Activated B cell treated with CpG ODN at 0.5 μM for 24 hours (primary cell): ENCODE measurements at regions of chr22 and their contacts with region 1.

Region 1: DNA sequence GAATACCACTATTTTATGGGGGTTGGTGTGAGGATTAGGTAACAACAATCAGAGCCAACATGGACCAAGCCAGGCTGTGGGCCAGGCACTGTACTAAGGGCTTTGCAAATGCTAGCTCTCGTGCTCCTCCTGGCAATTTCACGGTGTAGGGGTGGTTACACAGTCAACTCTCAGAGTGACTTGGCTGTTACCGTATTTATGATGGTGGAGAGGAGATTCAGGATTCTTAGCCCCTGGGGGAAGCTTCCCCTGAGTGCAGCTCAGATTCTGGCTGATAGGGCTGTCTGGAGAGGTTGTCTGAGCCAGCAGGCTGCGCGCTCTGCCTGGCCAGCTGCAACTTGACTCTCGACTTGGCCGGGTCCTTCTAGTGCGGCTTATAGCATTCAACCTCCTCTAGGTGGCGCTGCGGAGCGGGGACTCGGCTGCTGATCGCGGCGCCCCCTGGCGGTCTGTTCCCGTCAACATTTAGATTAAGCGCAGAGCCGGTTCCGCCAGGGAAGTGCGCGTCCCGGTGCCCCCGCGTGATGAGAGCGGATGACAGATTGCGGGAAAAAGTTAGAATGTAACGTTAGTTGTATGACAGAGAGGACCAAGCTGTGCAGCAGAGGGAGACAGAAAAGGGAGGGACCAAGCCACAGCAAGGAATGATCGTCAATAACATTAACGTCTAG is 4.5 kb upstream of the NCF4 start:
- DNase-seq: peak; percentile 96
- ATAC-seq: peak; percentile 39
- H3K4me3 Mint-ChIP-seq: peak overlapping the region; percentile 69
- H3K27ac Mint-ChIP-seq: peak overlapping the region; percentile 91
- H3K4me1 Mint-ChIP-seq: peaks cover 64% of the 10 kb centered on the region
- H3K27me3 Mint-ChIP-seq: no peaks in the 10 kb centered on the region
- CTCF ChIP-seq: peak; percentile 100

Region 2: DNA sequence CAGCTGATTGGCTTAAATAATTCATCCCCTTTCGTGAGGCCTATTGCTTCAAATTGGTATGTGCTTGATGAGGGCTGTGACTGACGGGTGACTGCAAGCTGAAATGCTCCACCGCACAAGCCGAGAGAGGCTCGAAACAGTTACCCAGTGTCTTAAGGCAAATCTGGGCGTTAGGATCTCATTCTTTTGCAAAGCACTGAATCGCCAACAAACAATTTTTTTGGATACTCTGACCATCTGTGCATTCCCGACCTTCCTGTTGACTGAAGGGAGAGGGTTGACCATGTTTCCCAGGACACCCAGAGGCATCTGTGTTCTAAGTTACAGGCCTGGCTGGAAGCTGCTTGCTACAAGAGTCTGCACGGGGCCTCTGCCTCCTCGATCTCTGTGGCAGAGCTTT is 184.9 kb before region 1 on chr22:
- CTCF ChIA-PET with region 1: no interaction called
- POLR2A ChIA-PET with region 1: no interaction called
- intact Hi-C with region 1: no loop called
- DNase-seq: no peak
- ATAC-seq: no peak
- H3K4me3 Mint-ChIP-seq: no peak overlapping the region
- H3K27ac Mint-ChIP-seq: no peak overlapping the region
- H3K4me1 Mint-ChIP-seq: no peaks in the 10 kb centered on the region
- H3K27me3 Mint-ChIP-seq: peaks cover 15% of the 10 kb centered on the region
- CTCF ChIP-seq: no peak

Region 3: DNA sequence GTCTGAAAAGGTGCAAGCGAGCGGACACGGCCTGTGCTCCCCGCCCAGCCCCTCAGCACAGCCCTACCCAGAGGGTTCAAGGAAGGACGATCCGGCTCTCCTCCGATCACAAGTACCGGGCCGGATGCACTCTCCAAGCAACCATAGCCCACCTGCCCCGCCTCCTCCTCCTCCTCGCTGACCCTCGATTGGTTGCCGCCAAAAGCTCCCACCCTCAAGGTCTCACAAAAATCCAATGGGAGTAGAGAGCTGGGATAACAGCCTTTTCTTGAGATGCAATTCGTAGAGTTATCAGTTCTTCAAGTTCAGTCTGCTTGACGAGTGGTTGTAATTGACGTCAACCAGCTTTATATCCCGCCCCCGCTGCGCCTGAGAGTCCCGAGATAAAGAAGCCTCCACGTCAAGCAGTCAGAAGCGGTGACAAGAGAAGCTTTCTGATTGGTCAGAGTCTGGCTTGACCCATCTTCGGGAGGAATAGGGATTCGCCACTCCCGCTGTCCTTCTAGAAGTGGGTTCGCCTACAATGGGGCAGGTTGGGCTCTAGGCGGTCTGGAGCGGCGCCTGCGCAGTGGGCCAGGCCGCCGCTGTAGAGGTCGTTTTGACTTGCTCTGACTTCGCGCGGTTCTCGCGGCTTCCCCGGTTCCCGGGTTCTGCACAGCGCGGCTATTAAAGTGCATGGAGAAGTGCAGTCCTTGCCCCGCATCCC is 80.1 kb before region 1 on chr22 and contains the start of gene IFT27:
- CTCF ChIA-PET with region 1: interaction called, 53 read pairs
- POLR2A ChIA-PET with region 1: interaction called, 24 read pairs
- intact Hi-C with region 1: loop called (anchors 1 kb)
- DNase-seq: peak; percentile 81
- ATAC-seq: peak; percentile 89
- H3K4me3 Mint-ChIP-seq: peak within 1 kb of the TSS; percentile 88
- H3K27ac Mint-ChIP-seq: peak within 1 kb of the TSS; percentile 89
- H3K4me1 Mint-ChIP-seq: peaks cover 14% of the 10 kb centered on the region
- H3K27me3 Mint-ChIP-seq: no peaks in the 10 kb centered on the region
- CTCF ChIP-seq: no peak
- total RNA-seq, gene IFT27: 26.2 and 32.7 TPM in 2 replicates

Region 4: DNA sequence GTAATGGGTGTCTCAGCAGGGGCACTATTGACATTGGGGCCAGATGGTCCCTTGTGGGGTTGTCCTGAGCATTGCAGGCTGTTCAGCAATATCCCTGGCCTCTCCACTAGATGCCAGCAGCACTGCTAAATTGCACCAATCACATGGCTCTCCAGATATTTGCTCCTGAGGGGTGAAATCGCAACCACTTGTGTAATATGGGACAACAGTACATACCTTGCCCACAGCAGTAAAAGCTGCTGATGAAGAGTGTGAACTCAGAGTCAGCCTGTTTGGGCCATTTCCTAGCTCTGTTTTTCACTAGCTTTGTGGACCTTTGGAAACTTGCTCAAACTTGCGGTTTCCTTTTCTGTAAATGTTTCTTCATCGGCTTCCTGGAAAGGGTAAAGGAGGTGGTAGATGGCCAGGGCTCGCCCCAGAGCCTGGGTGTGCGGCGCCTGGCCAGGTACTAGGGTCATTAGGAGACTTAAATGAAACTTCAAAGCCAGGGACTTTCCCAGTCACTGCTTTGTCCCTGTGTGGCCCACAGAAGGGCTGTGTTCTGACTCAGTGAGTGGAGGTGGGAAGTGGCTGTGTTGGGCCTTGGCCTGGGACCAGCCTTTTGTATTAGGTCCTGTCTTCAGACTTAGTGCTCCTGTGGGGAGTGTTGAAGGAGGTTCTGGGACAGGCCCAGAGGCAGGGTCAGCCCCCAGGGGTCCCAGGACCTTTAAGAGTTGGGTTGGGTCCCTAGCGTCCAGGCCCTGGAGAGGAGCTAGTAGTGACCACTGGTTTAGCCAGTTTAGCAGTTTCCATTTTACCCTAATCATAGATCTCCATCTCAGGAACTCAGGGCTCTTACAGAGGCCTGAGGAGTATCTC is 17.7 kb after region 1 on chr22:
- CTCF ChIA-PET with region 1: interaction called, 6 read pairs
- POLR2A ChIA-PET with region 1: interaction called, 11 read pairs
- intact Hi-C with region 1: loop called (anchors 2 kb)
- DNase-seq: no peak
- ATAC-seq: peak; percentile 76
- H3K4me3 Mint-ChIP-seq: peak overlapping the region; percentile 28
- H3K27ac Mint-ChIP-seq: peak overlapping the region; percentile 88
- H3K4me1 Mint-ChIP-seq: peaks cover 16% of the 10 kb centered on the region
- H3K27me3 Mint-ChIP-seq: no peaks in the 10 kb centered on the region
- CTCF ChIP-seq: no peak

Region 5: DNA sequence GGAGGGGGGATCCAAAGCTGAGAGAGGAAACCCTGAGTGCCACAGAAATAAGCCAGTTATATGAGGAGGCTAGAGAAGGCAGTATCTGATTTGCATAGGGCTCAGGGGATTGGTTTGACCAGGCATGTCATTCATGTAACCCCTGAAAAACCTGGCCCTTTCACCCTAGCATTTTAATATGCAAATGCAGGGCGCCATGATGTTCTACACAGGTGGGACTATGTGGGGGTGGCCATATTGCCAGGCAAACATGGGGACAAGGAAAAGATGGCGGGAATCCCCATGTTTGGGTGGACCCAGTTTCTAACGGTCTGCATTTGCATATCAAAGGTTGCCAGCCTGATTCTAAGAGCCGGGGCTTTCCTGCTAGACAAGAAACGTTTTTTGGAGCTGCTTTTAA is 84.4 kb after region 1 on chr22:
- CTCF ChIA-PET with region 1: interaction called, 7 read pairs
- POLR2A ChIA-PET with region 1: interaction called, 26 read pairs
- intact Hi-C with region 1: loop called (anchors 1 kb)
- DNase-seq: peak; percentile 38
- ATAC-seq: peak; percentile 87
- H3K4me3 Mint-ChIP-seq: peak overlapping the region; percentile 65
- H3K27ac Mint-ChIP-seq: peak overlapping the region; percentile 89
- H3K4me1 Mint-ChIP-seq: peaks cover 59% of the 10 kb centered on the region
- H3K27me3 Mint-ChIP-seq: no peaks in the 10 kb centered on the region
- CTCF ChIP-seq: no peak

Region 6: GRCh38 chr22:37121887-37122591 is 265.8 kb after region 1 on chr22:
- CTCF ChIA-PET with region 1: no interaction called
- POLR2A ChIA-PET with region 1: no interaction called
- intact Hi-C with region 1: loop called (anchors 2 kb)
- DNase-seq: peak; percentile 62
- ATAC-seq: peak; percentile 92
- H3K4me3 Mint-ChIP-seq: peak overlapping the region; percentile 76
- H3K27ac Mint-ChIP-seq: peak overlapping the region; percentile 94
- H3K4me1 Mint-ChIP-seq: peaks cover 44% of the 10 kb centered on the region
- H3K27me3 Mint-ChIP-seq: no peaks in the 10 kb centered on the region
- CTCF ChIP-seq: no peak

Region 7: DNA sequence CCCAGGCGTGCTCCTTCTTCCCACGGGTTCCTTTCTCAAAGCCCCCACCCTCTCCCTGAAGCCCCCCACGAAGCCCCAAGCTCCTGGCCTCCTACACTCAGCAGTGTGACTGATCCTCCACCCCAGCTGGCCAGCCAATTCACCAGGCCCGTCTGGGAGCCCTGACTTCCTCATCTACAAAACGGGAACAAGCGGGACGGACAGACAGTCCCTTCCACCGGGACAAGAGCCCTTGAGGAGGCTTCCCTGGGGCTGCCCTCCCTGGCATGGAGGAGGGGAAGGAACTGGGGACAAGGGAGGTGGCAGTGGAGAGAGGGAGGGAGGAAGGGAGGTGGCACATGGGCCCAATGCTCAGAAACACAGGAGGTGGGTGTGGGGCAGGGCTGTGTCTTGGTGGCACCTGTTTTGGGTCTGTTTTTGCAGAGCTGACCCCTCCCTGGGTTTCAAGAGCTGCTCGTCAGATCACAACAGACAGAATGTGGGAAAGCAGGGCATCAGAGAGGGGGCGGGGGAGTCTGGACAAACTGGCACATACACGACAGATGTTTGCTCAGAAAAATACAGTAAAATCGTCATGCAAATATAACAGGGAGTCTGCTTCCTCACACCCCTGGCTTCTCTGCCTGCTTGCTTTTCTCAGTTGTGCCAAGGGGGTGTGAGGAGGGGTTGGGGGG is 514.2 kb after region 1 on chr22:
- CTCF ChIA-PET with region 1: no interaction called
- POLR2A ChIA-PET with region 1: no interaction called
- intact Hi-C with region 1: no loop called
- DNase-seq: peak; percentile 28
- ATAC-seq: peak; percentile 61
- H3K4me3 Mint-ChIP-seq: peak overlapping the region; percentile 38
- H3K27ac Mint-ChIP-seq: peak overlapping the region; percentile 70
- H3K4me1 Mint-ChIP-seq: peaks cover 57% of the 10 kb centered on the region
- H3K27me3 Mint-ChIP-seq: peaks cover 7% of the 10 kb centered on the region
- CTCF ChIP-seq: no peak